B cell (primary cell): ENCODE measurements at regions of chr3 and their contacts with region 1.

Region 1: DNA sequence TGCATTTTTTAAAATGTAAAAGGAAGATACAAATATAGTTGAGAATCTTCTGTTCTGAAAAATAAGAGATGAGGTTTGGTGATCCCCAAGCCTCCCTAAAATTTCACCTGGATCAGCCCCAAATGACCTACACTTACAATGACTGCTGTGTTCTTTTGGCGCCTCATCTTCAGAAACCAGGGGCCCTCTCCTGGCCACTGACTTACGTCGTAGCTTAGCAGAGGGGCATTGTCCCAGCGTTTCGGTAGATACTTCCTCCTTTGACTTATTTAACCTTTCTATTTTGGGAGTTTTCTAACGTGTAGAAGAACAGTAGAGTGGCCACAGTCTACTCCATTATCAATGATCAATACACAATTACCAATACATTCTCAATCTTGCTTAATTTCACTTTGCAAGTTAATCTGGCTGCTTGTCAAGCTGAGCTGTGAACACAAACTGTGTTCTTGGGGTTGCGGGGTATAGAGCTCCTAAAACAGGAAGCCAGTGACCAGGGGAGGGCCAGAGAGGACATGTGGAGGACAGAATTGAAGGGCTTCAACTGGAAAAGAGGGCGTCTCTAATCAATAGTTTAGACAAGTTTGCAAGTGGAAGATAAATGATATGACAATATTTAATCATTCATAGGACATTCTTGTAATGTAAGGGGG is 419.5 kb downstream of the LPP start:
- DNase-seq: peak; percentile 59
- ATAC-seq: peak; percentile 62
- H3K4me3 ChIP-seq: no peak overlapping the region
- H3K4me3 Mint-ChIP-seq: peak overlapping the region; percentile 52
- H3K27ac ChIP-seq: no peak overlapping the region
- H3K27ac Mint-ChIP-seq: peak overlapping the region; percentile 57
- H3K4me1 ChIP-seq: peaks cover 11 to 20% of the 10 kb centered on the region in 2 donors
- H3K4me1 Mint-ChIP-seq: peaks cover 26% of the 10 kb centered on the region
- H3K27me3 ChIP-seq: no peaks in the 10 kb centered on the region
- H3K27me3 Mint-ChIP-seq: no peaks in the 10 kb centered on the region
- CTCF ChIP-seq: peak; percentile 22

Region 2: DNA sequence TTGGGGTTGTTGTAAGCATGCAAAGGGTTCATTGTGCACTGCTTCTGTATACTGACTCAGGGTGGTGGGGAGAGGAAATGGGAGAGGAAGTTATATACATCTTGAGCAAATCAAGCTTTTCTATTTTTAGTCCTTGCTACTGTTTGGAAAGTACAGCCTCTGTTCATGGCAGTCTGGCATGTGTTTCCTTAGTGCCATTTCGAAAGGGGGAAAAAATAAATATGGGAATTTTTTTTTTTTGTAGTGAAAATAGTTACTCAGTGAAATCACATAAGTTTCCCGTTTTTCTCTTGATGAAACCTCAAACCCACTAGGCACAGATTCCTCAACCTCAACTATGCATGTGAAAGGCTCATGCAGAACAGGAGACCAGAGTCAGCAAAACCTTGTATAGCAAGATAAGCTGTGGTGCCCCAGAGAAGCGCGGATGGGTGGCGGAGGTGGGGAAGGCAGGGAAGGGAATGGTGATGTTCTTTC is 66.1 kb before region 1 on chr3:
- CTCF ChIA-PET with region 1: interaction called, 4 read pairs
- POLR2A ChIA-PET with region 1: no interaction called
- intact Hi-C with region 1: loop called (anchors 10 kb)
- DNase-seq: peak; percentile 26
- ATAC-seq: peak; percentile 33
- H3K4me3 ChIP-seq: peak overlapping the region in 3 of 5 experiments; percentile 8 to 26 (median 9)
- H3K4me3 Mint-ChIP-seq: peak overlapping the region; percentile 27
- H3K27ac ChIP-seq: no peak overlapping the region
- H3K27ac Mint-ChIP-seq: no peak overlapping the region
- H3K4me1 ChIP-seq: peaks cover 14% of the 10 kb centered on the region in 2 donors
- H3K4me1 Mint-ChIP-seq: peaks cover 28% of the 10 kb centered on the region
- H3K27me3 ChIP-seq: no peaks in the 10 kb centered on the region
- H3K27me3 Mint-ChIP-seq: no peaks in the 10 kb centered on the region
- CTCF ChIP-seq: no peak